Head of caudate nucleus (tissue), 42 donors: ENCODE measurements at regions of chr1 and their contacts with region 1.

Region 1: DNA sequence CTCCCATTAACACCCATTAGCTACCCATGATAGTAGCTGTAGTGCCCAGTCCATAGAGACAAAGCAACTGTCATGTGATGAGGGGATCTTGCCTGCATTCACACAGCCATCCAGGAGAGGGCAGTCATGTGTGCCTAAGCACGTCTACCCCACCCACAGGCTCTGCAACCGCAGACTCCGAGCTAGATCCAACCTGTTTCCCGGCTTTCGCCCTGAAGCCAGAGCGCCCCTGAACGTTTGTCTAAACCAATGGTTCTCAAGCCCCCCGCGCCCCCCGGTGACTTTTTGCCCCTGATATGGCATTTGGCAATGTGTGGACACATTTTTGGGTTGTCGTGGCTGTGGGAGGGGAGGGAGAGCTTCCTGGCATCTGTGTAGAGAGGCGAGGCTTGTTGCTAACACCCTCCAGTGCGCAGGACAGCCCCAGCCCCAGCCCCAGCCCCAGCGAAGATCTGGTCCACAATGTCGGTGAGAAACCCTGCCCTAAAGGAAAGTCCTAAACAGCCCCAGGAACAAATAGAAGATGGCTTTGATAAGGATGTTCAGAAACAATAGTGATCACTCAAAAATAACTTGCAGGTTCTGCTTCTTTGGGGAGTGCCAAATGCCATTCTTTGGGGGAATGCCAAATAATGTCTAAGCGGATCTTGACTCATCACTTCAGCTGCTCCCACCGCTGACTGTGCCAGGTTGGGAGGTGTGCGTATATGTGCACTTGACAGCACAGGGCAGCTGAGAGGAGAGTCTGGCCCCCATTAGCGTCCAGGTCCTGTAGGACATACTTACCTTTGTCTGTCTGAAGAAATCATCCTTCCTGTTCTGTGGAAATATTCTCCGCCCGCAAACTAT is 34.5 kb downstream of the SLC44A3 start:
- DNase-seq: peak; percentile 68 to 94 (median 86)

Region 2: DNA sequence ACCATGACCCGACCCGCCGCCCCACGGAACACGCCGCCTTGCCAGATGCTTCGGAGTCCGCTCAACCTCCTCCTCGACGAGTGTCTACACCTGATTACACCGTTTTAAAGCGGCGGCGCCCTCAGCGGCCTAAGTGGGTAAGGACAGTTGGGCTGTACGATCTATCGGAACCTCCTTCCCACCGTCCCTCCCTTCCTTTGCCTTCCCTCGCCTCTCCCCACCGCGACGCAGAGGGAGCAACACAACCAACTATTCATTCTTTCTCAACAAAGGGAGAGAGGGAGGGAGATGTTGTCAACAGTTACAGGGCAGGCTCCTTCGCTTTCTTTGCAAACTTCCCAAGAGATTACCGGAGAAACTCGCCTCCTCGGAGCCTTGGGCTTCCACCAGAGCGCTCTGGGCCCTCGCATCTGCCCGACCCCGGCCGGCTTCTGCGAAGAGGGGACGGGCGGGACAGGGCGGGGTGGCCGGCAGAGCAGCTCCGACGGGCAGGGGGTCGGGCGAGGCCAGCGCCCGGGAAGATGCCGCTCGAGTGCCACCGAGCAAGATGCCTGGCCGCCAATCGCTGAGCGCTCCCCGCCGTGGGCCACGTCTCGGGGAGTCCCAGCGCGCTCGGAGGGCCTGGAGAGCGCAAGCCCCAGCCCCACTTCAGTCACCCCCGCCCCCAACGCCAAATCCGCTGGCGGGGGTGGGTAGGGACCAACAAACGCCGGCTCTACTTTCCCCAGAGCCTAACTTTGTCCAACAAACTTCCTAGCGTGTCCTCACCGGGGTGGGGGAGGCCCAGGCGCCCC is 1173.7 kb before region 1 on chr1:
- intact Hi-C with region 1: no loop called
- DNase-seq: peak; percentile 47 to 82 (median 68)

Region 3: DNA sequence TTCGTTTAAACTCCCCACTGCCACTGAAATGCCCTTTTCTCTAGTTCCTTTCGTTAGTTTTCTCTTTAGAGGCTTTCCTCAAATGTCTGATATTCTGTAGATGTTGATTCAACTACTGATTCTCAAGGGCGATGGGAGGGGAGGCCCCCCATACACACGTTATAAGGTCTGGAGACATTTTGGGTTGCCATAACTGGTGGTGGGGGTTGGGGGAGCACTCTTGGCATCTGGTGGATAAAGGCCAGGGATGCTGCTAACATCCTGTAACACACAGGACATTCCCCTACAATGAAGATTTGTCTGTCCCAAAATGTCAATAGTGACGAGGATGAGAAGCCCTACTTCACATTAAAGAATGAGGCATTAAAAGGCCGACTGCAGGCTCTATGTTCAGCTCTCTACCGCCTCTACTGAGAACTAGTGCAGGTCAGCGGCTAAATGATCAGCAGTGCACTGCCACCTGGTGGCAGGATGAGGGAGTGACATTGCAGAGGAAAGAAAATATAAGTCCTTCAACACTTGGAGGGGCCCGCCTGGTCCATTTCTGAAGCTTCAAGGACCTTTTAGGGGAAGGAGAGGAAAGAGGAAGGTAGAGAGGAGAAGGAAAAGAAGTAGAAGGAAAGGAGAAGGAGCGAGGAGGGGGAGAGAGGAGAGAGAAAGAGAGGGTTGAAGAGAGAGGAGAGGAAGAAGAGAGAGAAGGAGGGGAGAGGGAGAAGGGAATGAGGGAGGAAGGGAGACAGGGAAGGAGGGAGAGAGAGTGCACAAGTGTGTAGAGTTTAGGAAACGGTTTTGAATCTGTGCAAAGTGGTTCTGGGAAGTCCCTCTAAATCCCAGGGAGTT is 188.7 kb after region 1 on chr1:
- intact Hi-C with region 1: loop called (anchors 2 kb)
- DNase-seq: peak; percentile 44 to 95 (median 88)